ENCODE measurements at regions of chr17 and their contacts with region 1.

Region 1: GRCh38 chr17:20155258-20156195 is 146.4 kb downstream of the SPECC1 start:
- DNase-seq: peak; percentile 99
- H3K4me3 ChIP-seq: peak overlapping the region; percentile 74
- H3K27ac ChIP-seq: peak overlapping the region; percentile 86
- H3K4me1 ChIP-seq: no peaks in the 10 kb centered on the region
- H3K27me3 ChIP-seq: no peaks in the 10 kb centered on the region
- CTCF ChIP-seq: no peak

Region 2: GRCh38 chr17:20206068-20206467 is 50.5 kb after region 1 on chr17:
- intact Hi-C with region 1: loop called (anchors 10 kb)
- DNase-seq: no peak
- H3K4me3 ChIP-seq: no peak overlapping the region
- H3K27ac ChIP-seq: no peak overlapping the region
- H3K4me1 ChIP-seq: no peaks in the 10 kb centered on the region
- H3K27me3 ChIP-seq: no peaks in the 10 kb centered on the region
- CTCF ChIP-seq: no peak

Region 3: DNA sequence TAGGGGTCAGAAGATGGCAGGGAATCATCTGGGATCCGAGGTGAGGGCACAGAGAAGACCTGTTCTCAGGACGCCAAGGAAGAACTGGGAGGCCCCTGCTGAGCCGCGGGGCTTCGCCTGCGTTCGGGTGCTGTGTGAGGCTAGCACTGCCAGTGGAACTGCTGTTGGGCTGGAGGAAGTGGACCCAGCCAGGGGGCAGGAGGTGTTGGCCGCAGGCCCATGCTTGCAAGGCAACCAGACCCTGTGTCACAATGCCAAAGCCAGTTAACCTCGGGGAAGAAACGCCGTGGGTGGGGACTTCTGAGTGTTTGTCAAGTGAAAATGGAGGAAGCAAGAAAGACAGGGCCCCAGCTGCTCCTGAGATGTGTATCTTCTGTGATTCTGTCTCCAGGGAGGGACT is 126.3 kb after region 1 on chr17:
- intact Hi-C with region 1: no loop called
- DNase-seq: peak; percentile 19
- H3K4me3 ChIP-seq: no peak overlapping the region
- H3K27ac ChIP-seq: no peak overlapping the region
- H3K4me1 ChIP-seq: no peaks in the 10 kb centered on the region
- H3K27me3 ChIP-seq: no peaks in the 10 kb centered on the region
- CTCF ChIP-seq: no peak

Measured in colonic mucosa (tissue), 4 donors.